ENCODE measurements at regions of chr5 and their contacts with region 1.

Region 1: DNA sequence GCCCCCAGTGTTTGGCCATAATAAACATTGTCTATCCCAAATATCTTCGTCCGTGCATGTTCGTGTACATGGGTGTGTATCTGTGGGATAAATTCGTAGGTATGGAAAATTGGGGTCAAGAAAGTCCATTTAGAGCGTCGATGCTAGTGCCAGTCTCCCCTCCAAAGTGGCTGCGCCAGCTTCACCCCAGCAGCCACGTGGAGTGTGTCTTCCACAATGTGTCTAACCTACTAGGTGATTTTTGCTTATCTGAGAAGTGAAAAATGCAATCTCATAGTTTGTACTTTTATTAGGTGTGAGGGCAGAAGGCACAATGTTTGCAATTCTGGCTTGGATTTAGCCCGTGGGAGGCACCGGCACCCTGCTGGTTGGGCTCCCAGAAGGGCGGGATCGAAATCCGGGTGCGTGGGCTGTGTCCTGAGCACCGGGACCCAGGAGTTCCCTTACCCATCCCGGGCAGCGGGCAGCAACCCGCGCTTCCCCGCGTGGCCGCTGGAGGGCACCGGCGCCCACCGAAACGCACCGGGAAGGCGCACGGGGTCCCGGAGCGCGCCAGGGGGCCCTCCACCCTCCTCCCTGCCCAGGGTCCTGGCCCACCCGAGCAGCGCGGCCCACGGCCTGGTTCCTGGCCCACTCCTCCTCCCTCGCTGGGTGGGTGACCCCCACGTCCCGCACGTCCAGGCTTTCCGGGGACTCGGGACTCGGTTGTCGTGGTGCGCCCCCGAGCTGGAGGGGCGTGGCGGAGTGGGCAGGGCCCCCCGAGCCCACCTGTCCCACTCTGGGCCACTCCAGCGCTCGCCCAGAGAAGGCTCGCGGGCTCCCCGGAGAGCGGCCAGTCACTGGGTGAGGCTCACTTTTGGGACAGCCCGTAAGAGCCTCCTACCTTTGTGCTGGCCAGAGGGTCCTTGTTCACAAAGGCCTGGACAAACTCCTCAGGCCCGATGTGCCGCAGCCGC is 55.4 kb upstream of the RNF130 start:
- DNase-seq: no peak
- ATAC-seq: peak; percentile 81
- H3K4me3 ChIP-seq: no peak overlapping the region
- H3K27ac ChIP-seq: no peak overlapping the region
- H3K4me1 ChIP-seq: no peaks in the 10 kb centered on the region
- H3K27me3 ChIP-seq: no peaks in the 10 kb centered on the region; a peak in 1 of 4 replicates
- CTCF ChIP-seq: peak; percentile 58 to 71 (median 63)
- EP300 ChIP-seq: no peak
- POLR2A ChIP-seq: no peak
- RAD21 ChIP-seq: peak; percentile 69

Region 2: DNA sequence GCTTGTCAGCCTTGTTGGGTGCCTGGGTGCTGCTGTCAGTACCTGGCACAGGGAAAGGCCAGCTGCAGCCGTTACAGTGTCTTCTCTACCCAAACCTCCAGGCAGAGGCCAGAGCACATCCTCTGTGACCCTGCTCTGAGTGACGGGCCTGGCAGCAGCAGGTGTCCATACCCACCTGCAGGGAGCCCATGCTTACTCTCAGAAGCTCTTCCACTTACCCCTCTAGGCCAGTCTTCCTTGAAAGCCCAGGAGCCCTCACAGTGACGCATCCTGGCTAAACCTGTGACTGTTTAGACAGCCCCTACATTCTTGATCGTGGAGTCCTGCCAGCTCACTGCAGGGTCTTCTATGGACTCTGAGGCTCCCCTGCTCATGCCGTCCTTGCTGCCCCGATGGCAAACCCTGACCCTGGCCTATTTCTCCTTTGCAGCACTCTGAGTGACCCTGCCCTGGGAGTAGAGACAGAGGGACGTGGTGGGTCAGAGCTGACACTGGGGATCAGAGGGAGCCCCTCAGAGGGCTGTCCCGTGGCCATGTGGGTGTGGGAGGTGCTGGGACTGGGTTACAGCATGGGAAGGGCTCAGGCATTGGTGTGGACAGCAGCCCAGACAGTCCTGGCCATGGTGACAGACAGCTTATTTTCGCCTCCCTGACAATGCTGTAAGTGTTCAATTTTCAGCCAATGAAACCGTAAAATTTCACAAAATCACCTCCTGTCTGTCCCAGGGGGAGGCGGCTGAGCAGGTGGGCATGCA is 12.1 kb after region 1 on chr5:
- CTCF ChIA-PET with region 1: no interaction called
- POLR2A ChIA-PET with region 1: no interaction called
- RAD21 ChIA-PET with region 1: no interaction called
- SMC1A ChIA-PET with region 1: no interaction called
- in situ Hi-C with region 1: no loop called
- intact Hi-C with region 1: no loop called
- DNase-seq: no peak
- ATAC-seq: no peak
- H3K4me3 ChIP-seq: no peak overlapping the region
- H3K27ac ChIP-seq: no peak overlapping the region
- H3K4me1 ChIP-seq: no peaks in the 10 kb centered on the region
- H3K27me3 ChIP-seq: no peaks in the 10 kb centered on the region
- CTCF ChIP-seq: no peak
- EP300 ChIP-seq: no peak
- POLR2A ChIP-seq: no peak
- RAD21 ChIP-seq: no peak

Region 3: GRCh38 chr5:180315762-180316212 is 188.8 kb after region 1 on chr5:
- CTCF ChIA-PET with region 1: interaction called, 10 read pairs
- POLR2A ChIA-PET with region 1: no interaction called
- RAD21 ChIA-PET with region 1: no interaction called
- SMC1A ChIA-PET with region 1: no interaction called
- in situ Hi-C with region 1: no loop called
- intact Hi-C with region 1: loop called (anchors 5 kb)
- DNase-seq: no peak
- ATAC-seq: peak; percentile 97
- H3K4me3 ChIP-seq: no peak overlapping the region
- H3K27ac ChIP-seq: no peak overlapping the region
- H3K4me1 ChIP-seq: no peaks in the 10 kb centered on the region
- H3K27me3 ChIP-seq: no peaks in the 10 kb centered on the region; a peak in 1 of 4 replicates
- CTCF ChIP-seq: peak; percentile 86 to 99 (median 97)
- EP300 ChIP-seq: no peak
- POLR2A ChIP-seq: no peak
- RAD21 ChIP-seq: peak; percentile 67

Region 4: GRCh38 chr5:180399401-180400215 is 272.6 kb after region 1 on chr5:
- CTCF ChIA-PET with region 1: no interaction called
- POLR2A ChIA-PET with region 1: no interaction called
- RAD21 ChIA-PET with region 1: no interaction called
- SMC1A ChIA-PET with region 1: no interaction called
- in situ Hi-C with region 1: no loop called
- intact Hi-C with region 1: no loop called
- DNase-seq: no peak
- ATAC-seq: no peak
- H3K4me3 ChIP-seq: no peak overlapping the region
- H3K27ac ChIP-seq: no peak overlapping the region
- H3K4me1 ChIP-seq: no peaks in the 10 kb centered on the region
- H3K27me3 ChIP-seq: no peaks in the 10 kb centered on the region; a peak in 1 of 4 replicates
- CTCF ChIP-seq: no peak
- EP300 ChIP-seq: no peak
- POLR2A ChIP-seq: no peak
- RAD21 ChIP-seq: no peak

Region 5: DNA sequence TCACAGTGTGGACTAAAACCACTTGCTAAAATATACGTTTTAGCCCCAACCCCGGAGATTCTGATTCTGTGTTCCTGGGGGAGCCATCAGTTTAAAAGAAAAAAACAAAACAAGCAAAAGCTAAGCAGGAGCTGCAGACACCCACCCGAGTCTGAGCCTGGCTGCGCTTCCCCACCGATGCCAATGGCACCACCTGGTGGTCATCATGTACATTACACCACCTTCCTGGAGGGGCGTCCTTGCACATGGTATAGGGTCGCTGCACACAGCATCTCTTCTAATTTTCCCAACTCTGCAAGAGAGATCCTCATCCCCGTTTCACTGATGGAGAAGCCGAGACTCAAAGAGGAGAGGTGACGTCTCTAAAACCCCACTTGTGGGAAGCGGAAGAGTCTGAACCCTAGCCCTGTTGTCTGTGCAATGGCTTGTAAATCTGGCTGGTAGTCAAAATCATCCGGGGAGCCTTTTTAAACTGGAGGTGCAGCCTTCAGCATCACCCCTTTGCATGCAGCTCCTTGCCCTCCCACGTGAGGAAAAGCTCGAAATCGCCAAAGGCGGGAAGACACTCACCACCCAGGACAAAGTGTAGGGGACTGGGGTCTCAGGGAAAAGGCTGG is 344.1 kb after region 1 on chr5:
- CTCF ChIA-PET with region 1: interaction called, 5 read pairs
- POLR2A ChIA-PET with region 1: no interaction called
- RAD21 ChIA-PET with region 1: interaction called, 3 read pairs
- SMC1A ChIA-PET with region 1: no interaction called
- in situ Hi-C with region 1: no loop called
- intact Hi-C with region 1: loop called (anchors 5 kb)
- DNase-seq: no peak
- ATAC-seq: peak; percentile 91
- H3K4me3 ChIP-seq: no peak overlapping the region
- H3K27ac ChIP-seq: no peak overlapping the region
- H3K4me1 ChIP-seq: no peaks in the 10 kb centered on the region
- H3K27me3 ChIP-seq: no peaks in the 10 kb centered on the region
- CTCF ChIP-seq: peak; percentile 85 to 88 (median 87)
- EP300 ChIP-seq: no peak
- POLR2A ChIP-seq: no peak
- RAD21 ChIP-seq: peak; percentile 72

Region 6: GRCh38 chr5:180605554-180606214 is 478.7 kb after region 1 on chr5:
- CTCF ChIA-PET with region 1: no interaction called
- POLR2A ChIA-PET with region 1: no interaction called
- RAD21 ChIA-PET with region 1: no interaction called
- SMC1A ChIA-PET with region 1: no interaction called
- in situ Hi-C with region 1: no loop called
- intact Hi-C with region 1: loop called (anchors 10 kb)
- DNase-seq: peak; percentile 17
- ATAC-seq: peak; percentile 84
- H3K4me3 ChIP-seq: no peak overlapping the region
- H3K27ac ChIP-seq: no peak overlapping the region
- H3K4me1 ChIP-seq: no peaks in the 10 kb centered on the region
- H3K27me3 ChIP-seq: no peaks in the 10 kb centered on the region
- CTCF ChIP-seq: peak; percentile 79 to 86 (median 83)
- EP300 ChIP-seq: no peak
- POLR2A ChIP-seq: no peak
- RAD21 ChIP-seq: peak; percentile 61

Region 7: DNA sequence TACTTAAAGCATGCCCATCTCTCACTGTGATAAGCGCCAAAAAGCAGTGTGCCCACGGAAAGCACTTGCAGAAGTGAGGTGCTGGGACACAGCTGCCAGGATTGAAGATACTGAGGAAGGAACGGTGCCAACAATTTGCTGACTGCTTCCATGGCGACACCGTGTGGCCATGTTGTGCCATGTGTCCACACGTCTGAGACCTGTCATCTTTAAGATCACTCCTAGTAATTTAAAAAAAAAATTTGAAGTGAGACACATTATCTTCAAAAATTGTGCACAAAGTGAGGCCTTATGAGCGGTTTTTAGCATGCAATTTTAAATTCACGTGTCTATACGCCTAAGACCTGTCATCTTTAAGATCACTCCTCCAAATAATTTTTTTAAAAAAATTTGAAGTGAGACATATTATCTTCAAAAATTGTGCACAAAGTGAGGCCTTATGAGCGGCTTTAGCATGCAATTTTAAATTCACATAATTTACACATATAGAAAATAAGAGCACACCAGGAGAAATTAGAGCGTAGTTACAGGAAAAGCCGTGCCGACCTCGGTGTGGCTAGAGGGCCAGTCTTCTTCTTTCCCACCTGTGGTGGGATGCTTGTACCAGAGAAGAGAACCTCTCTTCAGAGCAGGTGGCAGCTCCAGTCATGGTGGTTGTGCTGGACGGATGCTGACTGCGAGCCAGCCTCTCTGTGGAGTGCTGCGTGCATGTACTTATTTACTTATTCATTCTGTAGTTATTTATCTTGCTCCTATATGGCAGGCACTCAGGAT is 543.8 kb after region 1 on chr5:
- CTCF ChIA-PET with region 1: no interaction called
- POLR2A ChIA-PET with region 1: no interaction called
- RAD21 ChIA-PET with region 1: no interaction called
- SMC1A ChIA-PET with region 1: no interaction called
- in situ Hi-C with region 1: no loop called
- intact Hi-C with region 1: loop called (anchors 5 kb)
- DNase-seq: peak; percentile 15
- ATAC-seq: peak; percentile 76
- H3K4me3 ChIP-seq: no peak overlapping the region
- H3K27ac ChIP-seq: no peak overlapping the region
- H3K4me1 ChIP-seq: no peaks in the 10 kb centered on the region
- H3K27me3 ChIP-seq: peaks cover 0 to 2% of the 10 kb centered on the region in 2 experiments; a peak in 2 of 4 replicates
- CTCF ChIP-seq: peak; percentile 74 to 79 (median 78)
- EP300 ChIP-seq: no peak
- POLR2A ChIP-seq: no peak
- RAD21 ChIP-seq: peak; percentile 50